ENCODE measurements at regions of chr17 and their contacts with region 1.

Region 1: GRCh38 chr17:77054936-77055335 is 85.8 kb upstream of the SEC14L1 start:
- DNase-seq: no peak
- ATAC-seq: no peak
- H3K4me3 ChIP-seq: no peak overlapping the region
- H3K4me1 ChIP-seq: no peaks in the 10 kb centered on the region
- CTCF ChIP-seq: no peak

Region 2: DNA sequence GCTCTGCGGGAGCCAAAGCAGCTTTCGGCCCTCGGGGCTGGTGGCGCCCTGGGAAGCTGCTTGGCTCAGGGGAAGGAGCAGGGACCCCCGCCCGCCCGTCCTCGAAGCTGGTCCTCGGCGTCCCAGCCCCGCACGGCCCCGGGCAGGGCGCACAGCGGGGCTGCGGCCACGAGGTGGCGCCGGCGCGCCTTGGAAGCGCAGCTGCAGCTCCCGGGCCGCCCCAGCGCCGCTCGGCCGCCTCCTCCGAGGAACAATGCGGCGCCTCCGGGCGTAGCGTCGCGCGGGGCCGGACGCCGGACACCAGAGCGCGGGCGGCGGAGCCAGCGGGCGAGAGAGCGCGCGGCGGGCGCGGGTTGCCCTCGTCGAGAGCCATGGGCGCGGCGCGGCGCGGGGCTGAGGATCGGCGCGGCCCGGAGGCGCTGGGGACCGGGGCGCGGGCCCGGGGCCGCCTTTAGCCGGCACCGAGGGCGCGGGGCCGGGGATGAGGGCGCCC is 186.7 kb before region 1 on chr17 and contains the start of gene MGAT5B:
- intact Hi-C with region 1: loop called in 1 of 2 experiments (anchors 5 kb)
- DNase-seq: peak; percentile 71 to 82 (median 80)
- ATAC-seq: peak; percentile 96
- H3K4me3 ChIP-seq: no peak within 1 kb of the TSS
- H3K4me1 ChIP-seq: peaks cover 9% of the 10 kb centered on the region
- CTCF ChIP-seq: peak; percentile 83
- total RNA-seq, gene MGAT5B: 0.17 to 0.65 (median 0.44) TPM

Measured in mucosa of descending colon (tissue), 3 donors.